ENCODE measurements at regions of chr1 and their contacts with region 1.

Region 1: GRCh38 chr1:1374929-1375662 is at the start of gene AURKAIP1:
- DNase-seq: peak; percentile 100
- H3K4me3 ChIP-seq: peak within 1 kb of the TSS; percentile 88 to 95 (median 92)
- H3K27ac ChIP-seq: peak within 1 kb of the TSS; percentile 76
- H3K4me1 ChIP-seq: peaks cover 27% of the 10 kb centered on the region
- H3K27me3 ChIP-seq: no peaks in the 10 kb centered on the region
- CTCF ChIP-seq: peak in 1 of 2 donors; percentile 52
- total RNA-seq, gene AURKAIP1: 85.0 to 167 TPM

Region 2: DNA sequence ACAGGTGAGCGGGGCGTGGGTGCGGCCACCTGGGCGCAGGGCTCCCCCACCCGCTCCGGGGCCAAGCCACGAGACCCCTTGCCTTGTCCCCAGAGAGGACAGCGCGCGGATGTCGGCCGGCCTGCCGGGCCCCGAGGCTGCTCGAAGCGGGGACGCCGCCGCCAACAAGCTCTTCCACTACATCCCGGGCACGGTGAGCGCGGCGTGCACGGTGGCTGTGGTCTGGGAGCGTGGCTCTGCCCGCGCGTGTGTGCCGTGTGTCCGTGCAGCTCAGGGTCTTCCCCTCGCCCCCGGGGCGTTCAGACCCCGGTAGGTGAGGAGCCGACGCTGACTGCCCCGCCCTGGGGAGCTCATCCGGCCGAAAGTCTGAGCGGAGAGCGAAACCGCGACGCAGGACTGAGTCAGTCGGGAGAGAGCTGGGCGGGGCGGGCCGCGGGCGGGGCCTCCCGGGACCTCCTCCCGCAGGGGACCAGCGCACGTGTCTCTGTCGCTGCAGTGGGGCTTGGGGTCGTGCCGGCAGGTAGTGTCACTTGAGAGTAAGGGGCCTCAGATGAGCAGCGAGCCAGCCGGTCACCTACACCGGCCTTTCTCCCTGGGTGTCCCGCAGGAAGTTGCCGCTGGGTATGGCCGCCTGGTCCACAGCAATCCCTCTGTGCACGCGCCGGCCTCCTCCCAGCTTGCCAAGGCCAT is 408.3 kb before region 1 on chr1:
- CTCF ChIA-PET with region 1: no interaction called
- dilution Hi-C with region 1: loop called (anchors 5 kb)
- in situ Hi-C with region 1: no loop called
- intact Hi-C with region 1: no loop called
- DNase-seq: peak; percentile 90
- H3K4me3 ChIP-seq: peak overlapping the region; percentile 43 to 70 (median 59)
- H3K27ac ChIP-seq: peak overlapping the region; percentile 97
- H3K4me1 ChIP-seq: peaks cover 29% of the 10 kb centered on the region
- H3K27me3 ChIP-seq: no peaks in the 10 kb centered on the region
- CTCF ChIP-seq: no peak

Region 3: DNA sequence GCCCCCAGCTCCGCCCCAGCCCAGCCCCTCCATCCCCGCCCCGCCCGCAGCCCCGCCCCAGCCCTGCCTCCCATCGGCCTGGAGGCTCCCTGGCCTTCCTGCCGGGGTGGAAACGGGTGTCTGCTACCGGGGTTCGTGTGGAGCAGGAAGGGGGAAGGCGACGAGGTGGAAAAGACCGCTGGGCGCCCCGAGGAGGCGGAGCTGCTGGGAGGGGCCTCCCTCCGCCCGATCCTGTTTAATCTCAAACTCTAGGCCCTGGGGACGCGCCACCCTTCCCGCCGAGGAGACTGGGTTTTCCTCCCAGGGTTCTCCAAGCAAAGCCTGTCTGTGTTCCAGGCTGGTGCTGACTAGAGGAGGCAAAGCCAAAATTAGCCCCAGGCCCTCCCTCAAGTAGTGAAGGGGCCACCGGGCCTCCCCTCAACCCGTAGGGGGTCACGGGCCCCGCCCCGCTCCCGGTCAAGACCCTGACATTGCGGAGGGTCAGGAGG is 217.6 kb before region 1 on chr1:
- CTCF ChIA-PET with region 1: no interaction called
- dilution Hi-C with region 1: no loop called
- in situ Hi-C with region 1: no loop called
- intact Hi-C with region 1: no loop called
- DNase-seq: peak; percentile 86
- H3K4me3 ChIP-seq: peak overlapping the region; percentile 42 to 60 (median 49)
- H3K27ac ChIP-seq: peak overlapping the region; percentile 59
- H3K4me1 ChIP-seq: peaks cover 19% of the 10 kb centered on the region
- H3K27me3 ChIP-seq: no peaks in the 10 kb centered on the region
- CTCF ChIP-seq: no peak

Region 4: DNA sequence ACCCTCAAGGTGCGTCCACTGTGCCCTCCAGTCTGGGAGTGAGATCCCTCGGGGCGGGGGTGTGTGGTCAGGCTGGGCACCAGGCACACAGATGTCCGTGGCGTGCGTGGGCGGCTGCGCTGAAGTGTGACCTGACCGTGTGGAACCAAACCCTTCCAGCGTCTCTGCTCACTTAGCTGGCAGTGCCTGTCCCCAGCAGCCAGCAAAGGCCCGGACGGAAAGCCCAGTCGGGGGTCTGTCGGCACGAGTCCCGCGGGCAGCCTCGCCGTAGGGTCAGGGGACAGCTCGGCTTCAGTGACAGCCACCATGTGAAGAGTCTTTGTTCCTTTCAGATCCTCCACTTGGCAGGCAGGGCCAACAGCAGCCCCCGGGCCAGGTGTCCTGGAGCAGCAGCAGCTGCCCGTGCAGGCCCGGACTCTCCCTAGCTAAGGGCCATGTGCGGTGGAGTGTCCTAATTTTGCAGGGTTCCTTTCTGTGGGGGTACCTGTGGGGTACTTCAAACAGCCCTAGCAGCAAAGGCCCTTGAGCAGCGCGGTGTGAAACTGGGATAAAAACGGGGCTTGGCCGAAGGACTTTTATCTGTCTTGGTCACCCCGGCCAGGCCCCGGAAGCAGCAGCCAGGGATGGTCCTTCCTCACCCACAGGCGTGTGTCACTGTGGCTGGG is 189.9 kb before region 1 on chr1:
- CTCF ChIA-PET with region 1: no interaction called
- dilution Hi-C with region 1: loop called (anchors 5 kb)
- in situ Hi-C with region 1: no loop called
- intact Hi-C with region 1: no loop called
- DNase-seq: no peak
- H3K4me3 ChIP-seq: no peak overlapping the region
- H3K27ac ChIP-seq: no peak overlapping the region
- H3K4me1 ChIP-seq: peaks cover 6% of the 10 kb centered on the region
- H3K27me3 ChIP-seq: no peaks in the 10 kb centered on the region
- CTCF ChIP-seq: no peak

Region 5: GRCh38 chr1:1250786-1251284 is 124.3 kb before region 1 on chr1:
- CTCF ChIA-PET with region 1: no interaction called
- dilution Hi-C with region 1: no loop called
- in situ Hi-C with region 1: no loop called
- intact Hi-C with region 1: no loop called
- DNase-seq: peak; percentile 83
- H3K4me3 ChIP-seq: no peak overlapping the region
- H3K27ac ChIP-seq: peak overlapping the region; percentile 22
- H3K4me1 ChIP-seq: peaks cover 10% of the 10 kb centered on the region
- H3K27me3 ChIP-seq: no peaks in the 10 kb centered on the region
- CTCF ChIP-seq: no peak

Region 6: GRCh38 chr1:1324521-1325287 is 50.4 kb before region 1 on chr1 and contains the starts of genes CPTP and INTS11:
- CTCF ChIA-PET with region 1: no interaction called
- dilution Hi-C with region 1: no loop called
- in situ Hi-C with region 1: no loop called
- intact Hi-C with region 1: loop called (anchors 1 kb)
- DNase-seq: peak; percentile 86
- H3K4me3 ChIP-seq: peak within 1 kb of the TSS; percentile 81 to 96 (median 92)
- H3K27ac ChIP-seq: peak within 1 kb of the TSS; percentile 67
- H3K4me1 ChIP-seq: peaks cover 22% of the 10 kb centered on the region
- H3K27me3 ChIP-seq: no peaks in the 10 kb centered on the region
- CTCF ChIP-seq: no peak
- total RNA-seq, gene CPTP: 12.0 to 25.0 TPM
- total RNA-seq, gene INTS11: 46.3 to 107 TPM

Region 7: DNA sequence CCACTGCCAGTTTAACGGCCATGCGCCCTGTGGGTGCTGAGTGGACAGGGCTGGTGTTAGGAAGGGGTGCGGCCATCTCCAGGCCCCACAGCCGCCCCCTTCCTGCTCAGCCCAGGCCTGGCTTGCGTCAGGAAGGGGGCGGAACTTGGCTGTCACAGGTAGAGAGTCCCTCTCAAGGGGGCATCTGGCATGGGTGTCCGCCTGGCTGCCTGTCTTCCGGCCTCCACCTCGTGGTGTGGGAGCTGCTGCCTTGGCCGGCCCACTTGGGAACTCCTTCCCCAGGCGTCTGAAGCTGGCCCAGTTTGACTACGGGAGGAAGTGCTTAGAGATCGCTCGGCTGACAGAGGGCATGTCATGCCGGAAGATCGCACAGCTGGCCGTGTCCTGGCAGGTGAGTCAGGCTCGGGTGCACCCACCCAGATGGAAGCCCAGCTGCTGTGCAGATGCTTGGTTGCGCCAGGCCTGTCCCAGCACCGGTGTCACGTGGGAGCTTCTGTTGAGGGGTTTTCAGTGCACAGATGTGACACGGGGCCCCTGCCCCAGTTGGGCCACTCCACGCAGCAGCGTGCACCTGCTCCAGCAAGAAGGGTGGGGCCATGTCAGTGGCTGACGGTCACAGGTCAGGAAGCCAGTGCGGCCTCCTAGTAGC is 87.3 kb after region 1 on chr1:
- CTCF ChIA-PET with region 1: no interaction called
- dilution Hi-C with region 1: loop called (anchors 10 kb)
- in situ Hi-C with region 1: no loop called
- intact Hi-C with region 1: no loop called
- DNase-seq: peak; percentile 68
- H3K4me3 ChIP-seq: peak overlapping the region in 1 of 3 experiments; percentile 4
- H3K27ac ChIP-seq: no peak overlapping the region
- H3K4me1 ChIP-seq: peaks cover 17% of the 10 kb centered on the region
- H3K27me3 ChIP-seq: no peaks in the 10 kb centered on the region
- CTCF ChIP-seq: no peak

Region 8: GRCh38 chr1:1562556-1563195 is 187.6 kb after region 1 on chr1:
- CTCF ChIA-PET with region 1: no interaction called
- dilution Hi-C with region 1: loop called (anchors 5 kb)
- in situ Hi-C with region 1: no loop called
- intact Hi-C with region 1: no loop called
- DNase-seq: no peak
- H3K4me3 ChIP-seq: no peak overlapping the region
- H3K27ac ChIP-seq: no peak overlapping the region
- H3K4me1 ChIP-seq: no peaks in the 10 kb centered on the region
- H3K27me3 ChIP-seq: no peaks in the 10 kb centered on the region
- CTCF ChIP-seq: no peak

Measured in mammary epithelial cell (primary cell).